ENCODE measurements at regions of chr1 and their contacts with region 1.

Region 1: GRCh38 chr1:89358287-89358893 is 5.5 kb upstream of the GBP6 start:
- DNase-seq: peak; percentile 82
- ATAC-seq: peak; percentile 79

Region 2: DNA sequence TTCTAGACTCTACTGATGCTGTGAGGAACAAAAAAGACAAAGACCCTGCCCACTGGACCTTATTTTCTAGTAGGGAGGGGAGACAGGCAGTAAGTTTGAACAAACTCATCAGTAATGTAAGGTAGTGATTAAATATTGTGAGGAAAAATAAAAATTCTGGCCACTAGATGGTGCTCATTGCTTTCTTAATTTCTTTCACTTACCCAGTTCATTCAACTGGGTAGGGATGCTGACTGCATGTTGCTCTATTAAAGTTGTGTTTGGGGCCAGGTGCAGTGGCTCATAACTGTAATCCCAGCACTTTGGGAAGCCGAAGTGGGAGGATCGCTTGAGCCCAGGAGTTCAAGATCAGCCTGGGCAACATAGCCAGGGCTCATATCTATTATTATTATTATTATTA is 359.7 kb before region 1 on chr1:
- intact Hi-C with region 1: loop called (anchors 2 kb)
- DNase-seq: no peak
- ATAC-seq: peak; percentile 79

Region 3: DNA sequence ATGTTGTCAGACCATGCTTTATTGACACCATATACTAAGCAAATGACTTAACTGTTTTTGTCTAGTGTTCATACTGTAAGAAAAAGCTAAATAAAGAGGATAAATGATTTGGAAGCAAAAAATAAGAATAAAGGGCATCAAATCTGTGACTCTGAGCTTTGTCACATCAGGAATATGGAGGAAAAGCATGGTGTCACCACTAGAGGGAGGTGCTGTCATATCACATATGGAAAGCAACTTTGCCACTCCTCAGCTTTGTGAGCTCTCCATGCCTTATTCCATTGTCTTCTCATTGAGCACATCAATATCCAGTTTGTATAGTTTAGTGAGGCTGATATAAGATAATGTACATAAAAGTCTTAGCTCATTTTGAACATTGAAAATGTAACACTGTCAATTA is 272.6 kb before region 1 on chr1:
- intact Hi-C with region 1: loop called (anchors 5 kb)
- DNase-seq: no peak
- ATAC-seq: no peak

Region 4: GRCh38 chr1:89198491-89199072 is 159.8 kb before region 1 on chr1 and contains the start of gene GBP4:
- intact Hi-C with region 1: loop called (anchors 5 kb)
- DNase-seq: peak; percentile 77
- ATAC-seq: peak; percentile 80
- total RNA-seq, gene GBP4: 5.9 TPM

Region 5: DNA sequence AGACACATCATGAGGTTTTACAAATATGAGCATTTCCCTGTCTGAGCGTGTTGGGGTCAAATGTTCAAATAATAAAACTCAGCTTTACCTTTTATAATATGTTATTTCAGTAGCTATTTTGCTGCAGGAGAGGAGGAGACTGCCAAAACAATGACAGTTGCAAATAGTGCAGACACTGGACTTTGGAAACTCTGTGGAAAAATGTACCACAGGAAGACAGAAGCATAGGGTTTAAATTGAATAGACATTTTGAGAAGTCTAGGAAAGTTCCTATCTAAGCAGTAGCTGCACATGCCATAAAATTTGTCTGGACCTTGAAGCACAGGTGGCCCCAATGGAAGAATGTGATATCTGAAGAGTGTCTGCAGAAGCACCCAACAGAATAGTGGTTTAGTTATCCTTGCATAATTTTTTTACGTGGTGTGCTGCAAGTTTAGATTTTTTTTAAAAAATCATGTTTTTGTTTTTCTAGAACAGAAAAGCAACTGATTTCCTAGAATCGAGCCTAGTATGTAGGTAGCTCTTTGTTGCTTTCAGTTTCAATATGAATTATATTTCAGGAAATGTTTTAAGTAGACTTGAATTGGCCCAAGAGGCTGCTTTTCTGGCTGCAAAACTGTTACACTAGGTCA is 71.7 kb before region 1 on chr1:
- intact Hi-C with region 1: loop called (anchors 10 kb)
- DNase-seq: no peak
- ATAC-seq: no peak

Region 6: DNA sequence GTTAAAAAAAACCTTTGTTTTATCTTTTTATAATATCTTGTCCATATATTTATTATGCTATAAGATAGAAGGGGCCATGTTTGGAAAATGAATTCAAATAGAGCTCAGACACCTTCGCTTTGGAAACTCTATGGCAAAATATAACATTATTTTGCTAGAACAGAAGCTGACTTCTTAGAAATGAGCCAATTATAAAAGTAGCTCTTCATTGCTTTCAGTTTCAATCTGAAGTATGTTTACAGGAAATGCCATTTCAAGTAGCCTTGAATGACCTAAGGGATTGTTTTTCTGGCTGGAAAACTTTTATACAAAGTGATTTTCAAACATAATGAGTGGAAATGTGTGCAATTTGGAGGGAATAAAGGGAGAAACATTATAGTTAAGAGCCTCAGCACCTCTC is 47.9 kb before region 1 on chr1:
- intact Hi-C with region 1: loop called (anchors 5 kb)
- DNase-seq: no peak
- ATAC-seq: no peak

Region 7: DNA sequence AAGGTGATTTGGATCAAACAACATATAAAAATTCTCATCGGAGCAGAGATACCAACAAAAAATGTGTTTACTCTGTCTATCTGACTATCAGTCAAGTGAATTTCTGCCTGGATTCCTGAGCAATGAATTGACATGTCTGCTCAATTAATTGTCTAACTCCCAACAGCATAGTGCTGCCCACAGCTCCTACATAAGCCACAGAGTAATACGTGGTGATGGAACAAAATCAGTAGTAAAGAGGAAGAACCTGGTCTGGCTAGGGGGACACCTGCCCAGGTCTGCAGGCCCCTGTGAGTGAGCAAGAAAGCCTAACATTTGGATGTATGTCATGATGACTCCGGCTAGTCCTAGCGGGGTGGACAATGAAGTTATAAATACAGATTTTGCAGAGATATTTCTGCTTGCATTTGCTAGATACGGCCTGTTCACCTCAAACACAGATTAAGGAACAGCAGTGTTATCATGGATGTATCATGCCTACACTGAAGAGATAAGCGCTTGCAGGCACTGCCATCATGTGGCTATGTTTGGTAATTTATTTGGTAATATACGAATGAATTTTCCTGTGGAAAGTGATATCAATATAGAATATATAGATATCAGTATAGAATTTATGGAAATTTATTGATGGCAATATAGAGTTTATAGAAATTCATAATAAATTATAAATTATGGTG is 96.6 kb after region 1 on chr1:
- intact Hi-C with region 1: loop called (anchors 5 kb)
- DNase-seq: no peak
- ATAC-seq: no peak

Measured in Right ventricle myocardium inferior (tissue), 1 donor.